HEK293 (cell line): ENCODE measurements at regions of chr10 and their contacts with region 1.

Region 1: DNA sequence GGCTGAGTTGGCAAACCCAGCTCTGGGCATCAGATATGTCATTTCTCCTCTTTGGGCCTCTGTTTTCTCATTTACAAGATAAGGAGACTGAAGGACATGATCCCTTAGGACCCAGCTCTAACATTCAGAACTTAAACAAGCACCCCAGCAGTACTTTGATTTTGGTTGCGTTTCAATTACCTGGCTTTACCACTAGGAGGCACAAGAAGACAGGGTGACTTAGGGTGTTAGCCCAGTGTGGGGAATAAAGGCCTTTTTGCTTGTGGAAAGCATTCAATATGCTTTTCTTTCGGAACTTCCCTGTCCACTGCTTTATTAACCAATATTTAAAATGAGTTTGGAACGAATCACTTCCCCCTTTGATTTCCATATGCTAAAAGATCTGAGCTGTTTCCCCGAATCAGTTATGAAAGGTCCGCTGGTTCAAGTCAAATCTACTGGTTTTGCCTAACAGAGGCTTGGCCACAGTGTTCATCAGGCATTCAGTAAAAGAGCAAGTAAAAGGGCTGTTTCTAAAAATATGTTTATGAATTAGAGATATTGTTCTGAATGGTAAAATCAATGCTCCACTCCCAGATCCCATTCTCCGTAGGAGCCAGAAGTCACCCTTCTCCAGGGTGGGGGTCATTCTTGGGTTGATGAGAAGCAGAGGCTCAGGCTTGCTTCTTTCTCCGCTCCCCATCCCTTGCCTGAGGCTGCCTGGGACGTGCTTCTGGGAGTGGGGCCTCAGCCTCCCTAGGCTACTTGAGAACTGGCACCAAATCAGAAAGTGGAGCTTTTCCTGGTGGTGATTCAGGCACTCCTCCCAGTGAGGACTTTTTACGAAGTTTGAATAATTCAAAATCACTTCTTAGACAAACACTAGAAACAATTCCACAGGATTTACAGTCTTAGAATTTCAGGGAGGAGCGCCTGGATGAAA is 105.5 kb downstream of the MYOF start:
- H3K4me3 ChIP-seq: no peak overlapping the region
- H3K27ac ChIP-seq: no peak overlapping the region
- H3K4me1 ChIP-seq: 0 out of 2 replicates have a peak, but pooled peaks cover 4% of the 10 kb centered on the region
- CTCF ChIP-seq: peak; percentile 59; the same call in 1 of the 2 replicates

Region 2: DNA sequence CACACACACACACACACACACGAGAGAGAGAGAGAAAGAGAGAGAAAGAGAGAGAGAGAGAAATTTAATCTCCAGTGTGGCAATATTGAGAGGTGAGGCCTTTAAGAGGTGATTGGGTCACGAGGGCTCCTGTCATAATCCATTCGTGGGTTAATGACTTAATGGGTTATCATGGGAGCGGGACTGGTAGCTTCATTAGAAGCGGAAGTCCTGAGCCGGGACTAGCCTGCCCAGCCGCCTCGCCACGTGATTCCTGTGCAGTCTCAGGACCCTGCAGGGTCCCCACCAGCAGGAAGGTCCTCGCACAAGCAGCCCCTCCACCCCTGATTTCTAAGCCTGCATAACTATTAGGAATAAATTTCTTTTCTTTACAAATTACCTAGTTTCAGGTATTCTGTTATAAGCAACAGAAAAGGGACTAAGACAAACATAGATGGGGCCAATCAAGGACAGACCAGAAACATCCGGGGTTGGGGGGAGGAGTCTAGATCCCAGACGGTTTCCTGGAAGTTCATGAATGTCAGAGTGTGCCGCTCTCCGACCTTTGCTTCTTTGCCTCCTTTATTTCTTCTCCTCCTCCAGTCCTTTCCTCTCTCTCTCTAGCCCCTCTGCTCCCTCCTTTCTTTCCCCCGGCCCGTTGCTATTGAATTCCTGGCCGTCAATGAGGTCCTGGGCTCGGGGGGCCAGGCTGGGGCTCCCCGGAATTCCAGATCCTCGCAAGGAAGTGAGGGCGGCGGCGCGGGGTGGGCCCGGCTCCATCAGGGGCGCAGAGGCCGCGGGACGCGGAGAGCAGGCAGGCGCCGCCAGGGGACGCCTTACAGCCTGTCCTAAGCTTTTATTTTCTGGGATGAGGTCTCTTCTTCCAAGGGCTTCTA is 156.1 kb before region 1 on chr10:
- CTCF ChIA-PET with region 1: no interaction called
- POLR2A ChIA-PET with region 1: no interaction called
- H3K4me3 ChIP-seq: no peak overlapping the region
- H3K27ac ChIP-seq: no peak overlapping the region
- H3K4me1 ChIP-seq: no peaks in the 10 kb centered on the region
- CTCF ChIP-seq: no peak

Region 3: GRCh38 chr10:93346694-93347093 is 29.9 kb before region 1 on chr10:
- CTCF ChIA-PET with region 1: no interaction called
- POLR2A ChIA-PET with region 1: no interaction called
- H3K4me3 ChIP-seq: no peak overlapping the region
- H3K27ac ChIP-seq: no peak overlapping the region
- H3K4me1 ChIP-seq: no peaks in the 10 kb centered on the region
- CTCF ChIP-seq: no peak

Region 4: DNA sequence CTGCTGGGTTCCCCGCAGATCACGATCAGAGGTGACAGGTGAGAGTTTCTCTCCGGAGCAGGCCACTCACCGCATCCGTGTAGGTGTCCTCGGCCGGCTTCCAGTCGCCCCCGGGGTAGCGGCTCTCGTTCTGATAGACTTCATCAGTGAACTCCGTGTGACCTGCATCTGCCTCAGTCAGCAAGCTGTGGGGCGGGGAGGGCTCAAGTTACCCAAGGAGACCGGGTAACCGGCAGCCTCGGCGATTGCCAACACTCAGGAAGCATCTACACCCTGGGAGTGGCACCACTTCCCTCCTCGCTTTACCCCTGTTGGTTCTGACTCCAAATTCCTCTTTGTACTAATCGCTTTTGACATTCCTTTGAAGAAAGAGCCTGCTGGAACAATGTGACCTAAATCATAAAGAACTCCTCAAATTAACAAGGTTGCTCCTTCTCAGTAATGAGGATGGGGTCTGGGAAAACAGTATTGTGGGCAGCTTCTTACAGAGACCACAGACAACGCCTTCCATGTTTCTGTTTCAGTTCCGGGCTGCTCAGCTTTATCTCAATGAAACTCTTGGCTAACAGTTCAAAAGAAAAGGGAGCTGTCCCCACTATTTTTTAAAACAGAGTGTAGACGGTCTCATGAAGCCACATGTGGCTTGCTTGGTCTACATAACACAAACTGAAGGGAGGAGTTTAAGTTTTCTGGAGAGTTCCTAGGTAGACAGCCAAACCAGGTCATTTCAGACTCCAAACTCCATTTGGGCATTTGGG is 12.6 kb before region 1 on chr10:
- CTCF ChIA-PET with region 1: interaction called, 16 read pairs
- POLR2A ChIA-PET with region 1: no interaction called
- H3K4me3 ChIP-seq: no peak overlapping the region
- H3K27ac ChIP-seq: no peak overlapping the region
- H3K4me1 ChIP-seq: no peaks in the 10 kb centered on the region
- CTCF ChIP-seq: no peak

Region 5: DNA sequence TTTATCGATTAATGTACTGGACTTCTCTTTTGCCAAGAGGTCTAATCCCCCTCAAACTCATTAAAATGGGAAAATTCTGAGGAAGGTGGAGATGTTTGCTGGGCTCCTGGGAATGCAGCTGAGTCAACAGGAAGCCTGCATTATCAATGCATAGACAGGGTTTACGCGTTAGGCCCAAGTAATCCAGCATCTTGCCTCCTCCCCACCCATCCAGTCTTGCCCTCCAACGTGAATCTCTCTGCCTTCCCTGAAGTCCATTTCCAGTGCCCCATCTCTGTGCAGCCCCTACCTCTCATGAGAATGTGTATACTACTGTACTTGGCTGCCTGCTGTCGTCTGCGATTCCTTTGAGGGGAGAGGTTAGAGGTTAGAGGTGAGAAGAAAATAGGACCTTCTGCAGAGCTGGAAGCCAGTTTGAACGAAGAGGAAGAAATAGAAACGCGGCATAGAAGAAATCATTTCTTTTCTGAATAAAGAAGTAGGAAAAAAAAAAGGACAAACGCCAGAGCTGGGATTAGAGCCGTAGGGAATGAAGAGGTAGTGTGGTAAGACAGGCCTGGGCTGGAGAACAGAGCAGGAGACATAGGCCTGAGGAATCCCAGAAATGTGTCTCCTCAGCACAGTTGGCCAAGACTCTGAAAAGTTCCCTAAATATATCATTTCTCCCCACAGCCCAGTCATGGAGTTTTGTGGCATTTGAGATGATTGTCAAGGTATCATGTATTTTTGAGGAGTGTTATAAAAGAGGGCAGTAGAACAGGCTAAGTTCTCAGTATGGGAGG is 29.9 kb after region 1 on chr10:
- CTCF ChIA-PET with region 1: interaction called, 15 read pairs
- POLR2A ChIA-PET with region 1: no interaction called
- H3K4me3 ChIP-seq: no peak overlapping the region
- H3K27ac ChIP-seq: no peak overlapping the region
- H3K4me1 ChIP-seq: no peaks in the 10 kb centered on the region
- CTCF ChIP-seq: no peak

Region 6: GRCh38 chr10:93458821-93459257 is 82.2 kb after region 1 on chr10:
- CTCF ChIA-PET with region 1: interaction called, 33 read pairs
- POLR2A ChIA-PET with region 1: interaction called, 5 read pairs
- H3K4me3 ChIP-seq: no peak overlapping the region
- H3K27ac ChIP-seq: peak overlapping the region; percentile 2; the same call in 1 of the 2 replicates
- H3K4me1 ChIP-seq: no peaks in the 10 kb centered on the region
- CTCF ChIP-seq: no peak

Region 7: DNA sequence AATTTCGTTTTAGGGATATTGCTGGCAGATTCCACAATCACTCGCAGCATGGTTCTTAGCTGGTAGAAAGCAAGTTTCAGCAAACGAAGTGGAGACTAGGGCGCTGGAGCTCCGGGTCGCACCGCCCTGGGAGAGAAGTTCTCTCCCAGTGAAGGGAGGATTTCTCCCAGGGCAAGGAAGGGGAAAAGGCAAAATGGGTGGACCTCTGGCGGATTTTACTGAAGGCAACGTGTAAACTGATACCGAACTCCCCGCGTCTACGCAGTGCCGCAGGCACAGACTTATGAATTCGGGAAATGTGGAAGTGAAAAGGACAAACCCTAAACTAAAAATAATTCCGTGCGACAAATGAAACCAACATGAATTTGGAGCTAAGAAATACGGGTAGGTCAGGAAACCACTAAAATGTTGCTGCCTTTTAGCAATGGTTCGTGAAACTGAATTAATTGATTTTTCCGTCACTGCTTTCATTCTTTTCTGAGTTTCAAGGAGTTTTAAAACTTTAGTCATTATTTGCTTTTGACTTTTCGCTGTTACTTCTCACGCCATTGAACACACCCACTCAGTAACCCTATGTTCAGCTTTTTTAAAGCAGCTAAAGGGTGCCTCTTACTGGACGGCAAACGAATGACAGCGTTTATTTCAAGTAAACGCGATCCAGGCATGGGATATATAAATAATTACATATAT is 105.7 kb after region 1 on chr10 and contains the start of gene MYOF:
- CTCF ChIA-PET with region 1: interaction called, 435 read pairs
- POLR2A ChIA-PET with region 1: interaction called, 19 read pairs
- H3K4me3 ChIP-seq: peak within 1 kb of the TSS; percentile 62
- H3K27ac ChIP-seq: no peak within 1 kb of the TSS
- H3K4me1 ChIP-seq: no peaks in the 10 kb centered on the region
- CTCF ChIP-seq: no peak; the same call in 1 of the 2 replicates

Region 8: DNA sequence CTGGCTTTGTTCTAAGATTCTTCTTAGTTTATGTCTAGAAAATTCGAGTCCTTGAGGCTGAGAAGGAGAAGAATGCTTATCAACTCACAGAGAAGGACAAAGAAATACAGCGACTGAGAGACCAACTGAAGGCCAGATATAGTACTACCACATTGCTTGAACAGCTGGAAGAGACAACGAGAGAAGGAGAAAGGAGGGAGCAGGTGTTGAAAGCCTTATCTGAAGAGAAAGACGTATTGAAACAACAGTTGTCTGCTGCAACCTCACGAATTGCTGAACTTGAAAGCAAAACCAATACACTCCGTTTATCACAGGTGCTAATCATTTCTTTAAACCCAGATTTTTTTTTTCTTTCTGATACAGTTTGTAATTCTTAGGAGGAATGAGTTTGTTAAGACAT is 126.4 kb after region 1 on chr10:
- CTCF ChIA-PET with region 1: interaction called, 129 read pairs
- POLR2A ChIA-PET with region 1: no interaction called
- H3K4me3 ChIP-seq: no peak overlapping the region
- H3K27ac ChIP-seq: no peak overlapping the region
- H3K4me1 ChIP-seq: no peaks in the 10 kb centered on the region; the same call in 1 of the 2 replicates
- CTCF ChIP-seq: no peak